Ascending aorta (tissue), 2 donors: ENCODE measurements at regions of chr3 and their contacts with region 1.

Region 1: DNA sequence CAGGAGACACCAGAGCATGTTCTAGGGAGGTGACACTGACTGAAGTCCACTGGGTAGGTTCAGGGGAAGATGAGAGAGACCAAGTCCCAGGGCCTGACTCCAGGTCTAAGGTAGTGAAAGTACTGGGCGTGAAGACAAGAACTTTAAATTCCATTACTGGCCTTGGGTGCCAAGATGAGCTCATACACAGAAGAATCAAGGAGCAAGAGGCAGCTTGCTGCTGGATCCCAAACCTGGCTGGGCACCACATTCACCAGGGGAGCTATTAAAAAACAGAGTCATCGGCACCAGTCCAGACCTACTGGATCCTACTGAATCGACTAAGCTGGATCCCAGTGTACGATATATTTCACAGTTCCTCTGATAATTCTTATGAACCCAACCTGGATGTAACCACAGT is 42.1 kb upstream of the ATG7 start:
- DNase-seq: no peak
- H3K4me3 ChIP-seq: no peak overlapping the region
- H3K27ac ChIP-seq: peak overlapping the region; percentile 57 to 61
- H3K4me1 ChIP-seq: peaks cover 3 to 10% of the 10 kb centered on the region in 2 donors
- H3K27me3 ChIP-seq: no peaks in the 10 kb centered on the region
- CTCF ChIP-seq: no peak

Region 2: DNA sequence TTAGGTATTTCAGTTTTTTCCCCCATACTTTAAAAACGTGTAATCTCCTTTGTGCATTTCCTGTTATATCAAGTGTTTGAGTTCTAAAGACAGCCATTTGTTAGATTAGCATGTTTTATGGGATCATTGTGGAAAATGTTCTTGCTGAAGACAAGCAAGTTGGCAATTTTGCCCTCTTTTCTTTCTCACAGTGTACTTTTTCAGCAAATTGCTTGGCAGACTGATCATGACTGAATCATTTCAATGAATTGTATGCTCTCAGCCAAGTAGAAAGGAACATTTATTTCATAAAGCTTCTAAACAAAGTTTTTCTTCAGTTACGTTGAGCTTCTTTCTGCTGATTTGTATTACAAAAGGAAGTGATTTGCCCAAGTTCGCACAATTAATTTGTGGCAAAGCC is 93.7 kb after region 1 on chr3:
- intact Hi-C with region 1: loop called (anchors 5 kb)
- DNase-seq: no peak
- H3K4me3 ChIP-seq: no peak overlapping the region
- H3K27ac ChIP-seq: peak overlapping the region; percentile 64 to 72
- H3K4me1 ChIP-seq: peaks cover 0 to 12% of the 10 kb centered on the region in 2 donors
- H3K27me3 ChIP-seq: no peaks in the 10 kb centered on the region
- CTCF ChIP-seq: no peak